ENCODE measurements at regions of chr2 and their contacts with region 1.

Region 1: GRCh38 chr2:240060977-240061591 is 7.8 kb upstream of the OR6B3 start:
- DNase-seq: peak; percentile 62
- H3K4me3 Mint-ChIP-seq: no peak overlapping the region
- H3K27ac Mint-ChIP-seq: no peak overlapping the region
- H3K4me1 Mint-ChIP-seq: no peaks in the 10 kb centered on the region
- H3K27me3 Mint-ChIP-seq: peaks cover 30% of the 10 kb centered on the region

Region 2: DNA sequence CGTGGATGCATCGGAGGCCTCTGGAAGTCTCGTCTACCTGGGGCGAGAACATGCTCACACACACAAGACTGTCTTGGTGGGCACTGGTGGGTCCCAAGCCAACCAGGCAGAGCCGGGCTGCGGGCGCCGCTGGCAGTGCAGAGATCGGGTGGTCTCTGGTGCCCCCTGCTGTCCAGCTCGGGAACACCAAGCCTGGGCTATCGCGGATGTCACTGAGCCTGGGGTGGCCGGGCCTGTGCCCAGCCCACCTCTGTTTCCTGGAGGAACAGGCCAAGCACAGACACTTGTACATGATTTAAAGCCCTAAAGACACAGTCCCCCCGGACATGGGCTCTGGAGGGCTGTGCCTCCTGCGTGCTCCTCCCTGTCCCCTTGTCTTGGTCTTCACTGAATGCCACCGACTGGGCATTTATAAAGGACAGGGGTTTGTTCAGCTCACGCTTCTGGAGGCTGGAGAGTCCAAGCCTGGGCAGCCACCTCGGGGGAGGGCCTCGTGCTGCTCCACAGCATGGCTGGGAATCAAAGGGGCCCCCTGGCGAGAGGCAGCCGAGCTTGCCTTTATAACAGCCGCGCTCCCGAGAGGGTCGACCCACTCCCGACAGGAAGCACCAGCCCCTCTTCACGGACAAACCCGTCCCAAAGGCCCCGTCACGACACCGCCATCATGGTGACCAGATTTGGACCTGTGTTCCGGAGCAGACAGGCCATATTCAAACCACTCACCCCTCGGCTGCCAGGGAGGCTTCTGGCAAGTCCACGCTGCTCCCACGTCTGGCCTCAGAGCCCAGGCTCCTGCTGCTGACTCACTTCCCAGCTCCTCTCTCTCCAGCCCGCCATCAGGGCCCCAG is 82.9 kb after region 1 on chr2:
- CTCF ChIA-PET with region 1: interaction called, 16 read pairs
- POLR2A ChIA-PET with region 1: no interaction called
- DNase-seq: peak; percentile 80
- H3K4me3 Mint-ChIP-seq: no peak overlapping the region
- H3K27ac Mint-ChIP-seq: no peak overlapping the region
- H3K4me1 Mint-ChIP-seq: no peaks in the 10 kb centered on the region
- H3K27me3 Mint-ChIP-seq: no peaks in the 10 kb centered on the region

Measured in activated CD4-positive, alpha-beta T cell treated with anti-CD3 and anti-CD28 coated beads, Interleukin-2, amount 10 ng/mL, durations not matched to agents 7 days and 5 days (primary cell).